ENCODE measurements at regions of chr12 and their contacts with region 1.

Region 1: GRCh38 chr12:51961834-51962233 is 10.3 kb downstream of the ACVR1B start:
- DNase-seq: no peak
- H3K4me3 ChIP-seq: no peak overlapping the region
- H3K27ac ChIP-seq: no peak overlapping the region
- H3K4me1 ChIP-seq: no peaks in the 10 kb centered on the region
- CTCF ChIP-seq: no peak

Region 2: GRCh38 chr12:52243856-52244614 is 282.2 kb after region 1 on chr12:
- CTCF ChIA-PET with region 1: no interaction called
- POLR2A ChIA-PET with region 1: no interaction called
- intact Hi-C with region 1: no loop called
- DNase-seq: no peak
- H3K4me3 ChIP-seq: no peak overlapping the region
- H3K27ac ChIP-seq: no peak overlapping the region
- H3K4me1 ChIP-seq: no peaks in the 10 kb centered on the region
- CTCF ChIP-seq: no peak

Region 3: DNA sequence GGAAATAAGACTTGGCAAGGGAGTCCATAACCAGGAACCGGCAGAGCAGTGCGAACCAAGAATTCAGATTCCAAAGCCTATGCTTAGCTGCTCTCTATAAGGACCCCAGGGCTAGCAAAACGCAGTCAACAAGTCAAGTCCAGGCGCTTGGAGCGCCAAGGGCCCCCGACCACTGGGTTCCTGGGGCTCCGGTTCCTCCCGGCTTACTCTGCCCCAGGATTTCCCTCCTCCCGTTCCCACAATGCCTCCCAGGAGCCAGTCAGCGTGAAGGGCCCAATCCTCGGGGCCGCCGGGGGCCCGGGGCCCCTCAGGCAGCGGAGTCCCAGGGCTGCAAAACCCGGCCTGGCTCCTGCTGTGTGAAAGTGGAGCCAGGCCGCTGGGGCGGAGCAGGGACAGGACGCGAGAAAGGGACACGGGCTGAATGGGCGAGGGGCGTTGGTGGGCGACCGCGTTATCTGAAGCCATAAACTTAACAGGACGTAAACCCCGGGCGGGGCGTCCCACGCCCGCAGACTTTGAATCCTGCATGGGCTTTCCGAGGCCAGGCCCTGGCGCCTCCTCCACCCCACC is 941.5 kb after region 1 on chr12:
- CTCF ChIA-PET with region 1: no interaction called
- POLR2A ChIA-PET with region 1: no interaction called
- intact Hi-C with region 1: loop called (anchors 10 kb)
- DNase-seq: no peak
- H3K4me3 ChIP-seq: no peak overlapping the region
- H3K27ac ChIP-seq: no peak overlapping the region
- H3K4me1 ChIP-seq: peaks cover 4% of the 10 kb centered on the region
- CTCF ChIP-seq: no peak